Heart right ventricle (tissue), 16 donors: ENCODE measurements at regions of chr16 and their contacts with region 1.

Region 1: GRCh38 chr16:9778849-9779248 is 403.4 kb downstream of the GRIN2A start:
- DNase-seq: no peak
- ATAC-seq: no peak
- H3K4me3 ChIP-seq: no peak overlapping the region
- H3K27ac ChIP-seq: no peak overlapping the region
- H3K4me1 ChIP-seq: peaks cover 0 to 16% (median 0%) of the 10 kb centered on the region in 9 donors
- H3K27me3 ChIP-seq: no peaks in the 10 kb centered on the region
- CTCF ChIP-seq: no peak

Region 2: GRCh38 chr16:9625122-9625521 is 153.7 kb before region 1 on chr16:
- intact Hi-C with region 1: no loop called
- DNase-seq: no peak
- ATAC-seq: no peak
- H3K4me3 ChIP-seq: no peak overlapping the region
- H3K27ac ChIP-seq: no peak overlapping the region
- H3K4me1 ChIP-seq: no peaks in the 10 kb centered on the region
- H3K27me3 ChIP-seq: peaks cover 0 to 15% (median 3%) of the 10 kb centered on the region in 7 donors
- CTCF ChIP-seq: no peak

Region 3: DNA sequence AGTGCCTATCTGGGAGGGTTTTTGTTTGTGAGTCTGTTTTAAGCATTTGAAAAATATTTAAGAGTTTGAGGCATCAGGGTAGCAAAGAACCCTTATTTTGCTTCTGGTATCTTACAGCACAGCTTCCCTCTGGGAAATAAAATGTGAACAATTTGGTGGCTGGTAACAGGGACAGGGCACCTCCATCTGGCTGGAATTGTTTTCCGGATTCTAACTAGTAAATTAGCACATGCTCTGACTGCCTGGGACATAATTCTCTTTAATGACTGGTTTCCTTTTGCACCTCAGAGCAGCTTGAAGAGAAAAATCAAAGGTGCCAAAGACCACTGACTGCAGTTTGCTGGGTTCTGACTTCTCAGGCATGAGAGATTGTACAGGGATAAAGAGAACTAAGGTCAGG is 65.7 kb before region 1 on chr16:
- intact Hi-C with region 1: loop called in 1 of 10 experiments (anchors 10 kb)
- DNase-seq: no peak
- ATAC-seq: no peak
- H3K4me3 ChIP-seq: no peak overlapping the region
- H3K27ac ChIP-seq: no peak overlapping the region
- H3K4me1 ChIP-seq: no peaks in the 10 kb centered on the region
- H3K27me3 ChIP-seq: peaks cover 0 to 3% (median 0%) of the 10 kb centered on the region in 7 donors
- CTCF ChIP-seq: no peak

Region 4: GRCh38 chr16:10114409-10114808 is 335.6 kb after region 1 on chr16:
- intact Hi-C with region 1: no loop called
- DNase-seq: no peak
- ATAC-seq: no peak
- H3K4me3 ChIP-seq: no peak overlapping the region
- H3K27ac ChIP-seq: no peak overlapping the region
- H3K4me1 ChIP-seq: no peaks in the 10 kb centered on the region
- H3K27me3 ChIP-seq: peaks cover 0 to 5% (median 0%) of the 10 kb centered on the region in 7 donors
- CTCF ChIP-seq: no peak